ENCODE measurements at regions of chr7 and their contacts with region 1.

Region 1: DNA sequence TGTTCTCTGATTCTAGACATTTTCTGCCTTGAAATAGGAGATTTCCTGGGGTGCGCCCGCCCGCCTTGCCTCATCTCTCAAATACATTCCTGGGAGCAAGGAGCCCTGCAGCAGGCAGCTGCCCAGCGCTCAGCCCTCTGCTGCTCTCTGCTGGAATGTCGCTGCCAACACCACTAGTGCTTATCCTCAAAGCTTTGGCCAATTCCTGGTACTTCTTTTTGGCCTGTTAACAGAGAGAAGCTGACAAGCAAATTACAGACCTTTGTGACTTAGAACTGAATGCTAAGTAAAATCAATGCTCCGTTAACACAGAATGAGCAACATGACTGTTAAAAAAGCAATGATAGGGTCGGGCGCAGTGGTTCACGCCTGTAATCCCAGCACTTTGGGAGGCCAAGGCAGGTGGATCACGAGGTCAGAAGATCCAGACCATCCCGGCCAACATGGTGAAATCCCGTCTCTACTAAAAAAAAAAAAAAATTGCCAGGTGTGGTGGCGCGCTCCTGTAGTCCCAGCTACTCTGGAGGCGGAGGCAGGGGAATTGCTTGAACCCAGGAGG is 41.9 kb upstream of the SYPL1 start:
- DNase-seq: peak; percentile 59 to 74 (median 65)
- H3K4me3 ChIP-seq: no peak overlapping the region
- H3K4me3 Mint-ChIP-seq: no peak overlapping the region
- H3K27ac ChIP-seq: no peak overlapping the region
- H3K27ac Mint-ChIP-seq: peak overlapping the region in 1 of 7 donors; percentile 80
- H3K4me1 ChIP-seq: no peaks in the 10 kb centered on the region
- H3K4me1 Mint-ChIP-seq: peaks cover 0 to 9% (median 3%) of the 10 kb centered on the region in 4 donors
- H3K27me3 ChIP-seq: peaks cover 3% of the 10 kb centered on the region
- H3K27me3 Mint-ChIP-seq: peaks cover 11 to 19% of the 10 kb centered on the region in 2 donors

Region 2: GRCh38 chr7:106047818-106048705 is 105.9 kb before region 1 on chr7:
- CTCF ChIA-PET with region 1: interaction called, 17 read pairs
- POLR2A ChIA-PET with region 1: no interaction called
- intact Hi-C with region 1: no loop called
- DNase-seq: no peak
- H3K4me3 ChIP-seq: no peak overlapping the region
- H3K4me3 Mint-ChIP-seq: no peak overlapping the region
- H3K27ac ChIP-seq: no peak overlapping the region
- H3K27ac Mint-ChIP-seq: no peak overlapping the region
- H3K4me1 ChIP-seq: no peaks in the 10 kb centered on the region
- H3K4me1 Mint-ChIP-seq: no peaks in the 10 kb centered on the region
- H3K27me3 ChIP-seq: no peaks in the 10 kb centered on the region
- H3K27me3 Mint-ChIP-seq: peaks cover 1 to 3% of the 10 kb centered on the region in 2 donors

Region 3: DNA sequence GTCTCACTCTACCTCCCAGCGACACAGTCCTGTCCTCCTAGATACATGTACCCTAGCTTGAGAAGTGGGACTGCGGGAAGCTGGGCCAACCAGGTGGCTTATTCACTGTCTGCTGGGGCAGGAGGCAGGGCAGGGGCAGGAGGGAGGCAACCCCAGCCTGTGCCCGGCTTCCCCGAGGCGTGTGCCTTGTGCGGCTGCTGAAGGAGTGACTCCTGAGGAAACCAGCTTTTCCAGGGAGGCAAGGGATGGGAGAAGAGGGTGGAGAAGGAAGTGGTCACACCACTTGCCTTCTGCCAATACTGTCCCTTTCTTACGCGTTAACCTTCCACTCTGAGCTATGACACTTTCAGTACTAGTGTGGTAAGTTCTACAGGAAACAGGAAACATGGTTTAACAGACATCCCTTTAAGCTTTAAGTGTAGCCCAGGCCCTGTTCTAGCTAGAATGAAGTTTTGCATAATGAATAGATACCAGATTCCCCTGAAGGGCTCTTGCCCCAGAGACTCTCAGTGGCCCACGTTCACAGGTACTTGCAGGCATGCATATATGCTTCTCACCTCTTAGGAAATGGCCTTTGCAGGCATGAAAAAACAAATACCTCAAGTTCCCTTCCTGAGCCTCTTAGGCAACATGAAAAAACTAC is 82.5 kb before region 1 on chr7:
- CTCF ChIA-PET with region 1: interaction called, 423 read pairs
- POLR2A ChIA-PET with region 1: interaction called, 8 read pairs
- intact Hi-C with region 1: no loop called
- DNase-seq: peak; percentile 54 to 69 (median 63)
- H3K4me3 ChIP-seq: peak overlapping the region in 1 of 2 donors; percentile 49
- H3K4me3 Mint-ChIP-seq: peak overlapping the region; percentile 73 to 86 (median 82)
- H3K27ac ChIP-seq: peak overlapping the region; percentile 52
- H3K27ac Mint-ChIP-seq: peak overlapping the region; percentile 86 to 95 (median 94)
- H3K4me1 ChIP-seq: peaks cover 43% of the 10 kb centered on the region
- H3K4me1 Mint-ChIP-seq: peaks cover 28 to 62% (median 42%) of the 10 kb centered on the region in 4 donors
- H3K27me3 ChIP-seq: no peaks in the 10 kb centered on the region
- H3K27me3 Mint-ChIP-seq: no peaks in the 10 kb centered on the region

Region 4: DNA sequence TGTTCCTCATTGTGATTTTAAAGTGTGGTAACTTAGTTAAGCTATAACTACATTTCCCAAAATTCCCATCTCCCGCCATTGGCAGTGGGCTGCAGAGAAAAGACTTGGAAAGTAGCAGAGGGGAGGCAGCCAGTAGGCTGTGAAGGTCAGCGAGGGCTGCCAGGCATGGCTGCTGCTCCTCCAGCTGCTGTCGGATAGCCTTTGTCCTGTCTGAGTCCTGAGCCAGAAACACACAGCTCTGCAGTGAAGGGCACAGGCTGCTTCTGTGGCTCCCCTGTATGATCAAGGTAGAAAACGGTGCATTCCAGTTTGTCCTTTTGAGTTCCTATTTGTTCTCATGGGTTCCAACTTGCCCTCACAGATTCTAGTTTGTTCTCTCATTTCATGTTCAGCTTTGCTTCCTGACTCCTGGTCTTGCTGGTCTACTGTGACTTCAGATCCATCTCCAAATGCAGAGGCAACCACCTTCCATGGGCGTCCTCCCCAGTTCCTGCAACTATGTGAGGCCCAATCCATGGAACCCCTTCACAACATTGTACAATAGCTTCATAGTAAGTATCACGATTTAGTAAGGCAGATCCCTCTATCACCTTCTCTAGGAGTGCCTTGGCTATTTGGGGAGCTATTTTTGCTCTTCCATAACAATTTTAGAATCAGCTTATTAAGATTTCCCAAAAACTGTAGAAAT is 73.5 kb before region 1 on chr7:
- CTCF ChIA-PET with region 1: interaction called, 10 read pairs
- POLR2A ChIA-PET with region 1: no interaction called
- intact Hi-C with region 1: no loop called
- DNase-seq: no peak
- H3K4me3 ChIP-seq: no peak overlapping the region
- H3K4me3 Mint-ChIP-seq: no peak overlapping the region
- H3K27ac ChIP-seq: no peak overlapping the region
- H3K27ac Mint-ChIP-seq: no peak overlapping the region
- H3K4me1 ChIP-seq: no peaks in the 10 kb centered on the region
- H3K4me1 Mint-ChIP-seq: peaks cover 4 to 18% (median 8%) of the 10 kb centered on the region in 4 donors
- H3K27me3 ChIP-seq: no peaks in the 10 kb centered on the region
- H3K27me3 Mint-ChIP-seq: no peaks in the 10 kb centered on the region

Region 5: DNA sequence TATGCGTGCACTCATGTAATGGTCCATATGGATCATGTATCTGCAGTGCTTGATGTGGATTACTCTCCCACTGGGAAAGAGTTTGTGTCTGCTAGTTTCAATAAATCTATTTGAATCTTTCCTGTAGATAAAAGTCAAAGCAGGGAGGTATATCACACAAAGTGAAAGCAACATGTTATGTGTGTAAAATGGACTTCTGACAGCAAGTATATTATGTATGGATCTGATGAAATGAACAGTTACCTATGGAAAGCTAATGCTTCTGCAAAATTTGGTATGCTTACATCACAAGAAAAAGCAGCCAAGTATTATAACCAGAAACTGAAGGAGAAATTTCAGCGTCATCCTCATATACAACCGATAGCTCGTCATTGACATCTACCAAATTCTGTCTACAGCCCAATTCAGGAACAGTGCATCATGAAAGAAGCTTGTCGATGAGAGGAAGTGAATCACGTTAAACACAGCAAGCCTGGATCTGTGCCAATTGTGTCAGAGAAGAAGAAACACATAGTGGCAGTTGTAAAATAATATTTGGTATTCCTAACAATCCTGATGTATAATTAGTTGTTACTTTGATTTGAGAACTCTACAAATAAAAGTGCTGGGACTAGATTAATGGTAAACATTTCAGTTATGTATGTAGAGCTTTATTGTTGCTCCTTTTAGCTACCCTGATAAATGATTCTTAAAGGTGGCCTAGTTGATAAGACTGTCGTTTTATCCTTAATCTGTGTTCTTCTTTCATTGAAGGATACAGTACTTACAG is 27.6 kb before region 1 on chr7:
- CTCF ChIA-PET with region 1: interaction called, 13 read pairs
- POLR2A ChIA-PET with region 1: interaction called, 3 read pairs
- intact Hi-C with region 1: no loop called
- DNase-seq: peak; percentile 45 to 62 (median 48)
- H3K4me3 ChIP-seq: no peak overlapping the region
- H3K4me3 Mint-ChIP-seq: peak overlapping the region in 6 of 8 donors; percentile 52 to 73 (median 62)
- H3K27ac ChIP-seq: no peak overlapping the region
- H3K27ac Mint-ChIP-seq: peak overlapping the region in 3 of 7 donors; percentile 5 to 72 (median 43)
- H3K4me1 ChIP-seq: peaks cover 8% of the 10 kb centered on the region
- H3K4me1 Mint-ChIP-seq: peaks cover 6 to 14% (median 9%) of the 10 kb centered on the region in 4 donors
- H3K27me3 ChIP-seq: no peaks in the 10 kb centered on the region
- H3K27me3 Mint-ChIP-seq: peaks cover 9 to 10% of the 10 kb centered on the region in 2 donors

Region 6: GRCh38 chr7:106166655-106167342 is 12.8 kb after region 1 on chr7:
- CTCF ChIA-PET with region 1: interaction called, 108 read pairs
- POLR2A ChIA-PET with region 1: no interaction called
- intact Hi-C with region 1: no loop called
- DNase-seq: peak in 4 of 5 donors; percentile 33 to 41 (median 36)
- H3K4me3 ChIP-seq: no peak overlapping the region
- H3K4me3 Mint-ChIP-seq: no peak overlapping the region
- H3K27ac ChIP-seq: no peak overlapping the region
- H3K27ac Mint-ChIP-seq: peak overlapping the region in 1 of 7 donors; percentile 39
- H3K4me1 ChIP-seq: no peaks in the 10 kb centered on the region
- H3K4me1 Mint-ChIP-seq: no peaks in the 10 kb centered on the region
- H3K27me3 ChIP-seq: no peaks in the 10 kb centered on the region
- H3K27me3 Mint-ChIP-seq: peaks cover 6 to 7% of the 10 kb centered on the region in 2 donors